ENCODE measurements at regions of chr1 and their contacts with region 1.

Region 1: DNA sequence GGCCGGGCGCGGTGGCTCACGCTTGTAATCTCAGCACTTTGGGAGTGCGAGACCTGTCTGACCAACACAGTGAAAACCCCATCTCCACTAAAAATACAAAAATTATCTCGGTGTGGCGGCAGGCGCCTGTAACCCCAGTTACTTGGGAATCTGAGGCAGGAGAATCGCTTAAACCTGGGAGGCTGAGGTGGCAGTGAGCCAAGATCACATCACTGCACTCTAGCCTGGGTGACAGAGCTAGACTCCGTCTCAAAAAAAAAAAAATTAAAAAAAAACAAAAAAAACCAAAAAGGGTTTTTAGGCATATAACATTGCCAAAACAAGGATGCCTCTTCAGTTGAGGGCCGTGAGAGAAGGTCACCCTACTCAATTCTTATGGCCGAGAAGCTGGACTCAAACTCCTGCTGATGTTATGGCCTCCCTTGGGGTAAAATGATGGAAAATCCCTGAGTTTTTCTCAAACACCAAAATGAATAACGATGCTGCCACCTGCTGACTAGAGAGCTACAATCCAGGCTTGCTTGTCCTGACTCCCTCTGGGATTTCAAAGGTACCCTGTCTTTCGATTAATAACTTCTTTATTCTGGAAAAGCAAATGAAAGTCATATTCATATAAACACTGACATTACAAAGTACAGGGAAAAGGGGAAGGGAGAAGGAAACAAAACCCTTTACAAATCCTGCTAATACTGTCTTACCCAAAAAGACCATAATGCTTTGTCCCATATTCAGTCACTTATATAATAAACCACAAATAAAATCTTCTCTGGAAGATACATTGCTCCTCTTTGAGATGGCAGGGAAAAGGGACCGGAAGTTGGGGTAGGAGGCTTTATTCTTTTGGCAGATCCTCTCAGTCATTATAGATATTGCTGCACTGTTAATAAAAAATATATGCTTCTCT is 10.7 kb downstream of the RAB42 start:
- DNase-seq: peak; percentile 78
- H3K4me3 ChIP-seq: no peak overlapping the region
- H3K27ac ChIP-seq: peak overlapping the region; percentile 63
- H3K4me1 ChIP-seq: peaks cover 27% of the 10 kb centered on the region
- H3K27me3 ChIP-seq: no peaks in the 10 kb centered on the region
- CTCF ChIP-seq: peak; percentile 66 to 76

Region 2: GRCh38 chr1:28359592-28360239 is 243.1 kb before region 1 on chr1:
- CTCF ChIA-PET with region 1: no interaction called
- dilution Hi-C with region 1: no loop called
- in situ Hi-C with region 1: no loop called
- intact Hi-C with region 1: loop called (anchors 1 kb)
- DNase-seq: peak; percentile 40
- H3K4me3 ChIP-seq: no peak overlapping the region
- H3K27ac ChIP-seq: no peak overlapping the region
- H3K4me1 ChIP-seq: peaks cover under 1% of the 10 kb centered on the region
- H3K27me3 ChIP-seq: no peaks in the 10 kb centered on the region
- CTCF ChIP-seq: peak; percentile 65 to 78

Region 3: DNA sequence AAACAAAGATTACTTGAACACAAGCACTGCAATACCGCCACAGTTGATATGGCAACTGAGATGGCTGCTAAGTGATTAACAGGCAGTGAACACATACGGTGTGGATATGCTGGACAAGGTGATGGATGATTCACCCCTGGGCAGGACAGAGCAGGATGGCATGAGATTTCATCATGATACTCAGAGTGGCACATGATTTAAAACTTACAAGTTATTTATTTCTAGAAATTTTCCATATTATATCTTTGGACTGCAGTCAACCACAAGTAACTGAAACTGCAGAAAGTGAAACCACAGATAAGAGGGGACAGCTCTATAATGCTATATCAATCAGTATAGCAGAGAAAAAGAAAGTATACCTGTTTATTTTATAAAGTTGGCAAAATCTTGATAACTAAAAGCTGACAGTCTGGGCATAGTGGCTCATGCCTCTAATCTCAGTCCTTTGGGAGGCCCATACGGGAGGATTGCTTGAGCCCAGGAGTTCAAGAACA is 185.3 kb before region 1 on chr1:
- CTCF ChIA-PET with region 1: no interaction called
- dilution Hi-C with region 1: loop called (anchors 5 kb)
- in situ Hi-C with region 1: no loop called
- intact Hi-C with region 1: no loop called
- DNase-seq: peak; percentile 95
- H3K4me3 ChIP-seq: peak overlapping the region in 1 of 3 experiments; percentile 15
- H3K27ac ChIP-seq: peak overlapping the region; percentile 100
- H3K4me1 ChIP-seq: peaks cover 20% of the 10 kb centered on the region
- H3K27me3 ChIP-seq: no peaks in the 10 kb centered on the region
- CTCF ChIP-seq: no peak

Region 4: GRCh38 chr1:28552758-28553663 is 49.8 kb before region 1 on chr1 and contains the start of gene TRNAU1AP:
- CTCF ChIA-PET with region 1: no interaction called
- dilution Hi-C with region 1: loop called (anchors 5 kb)
- in situ Hi-C with region 1: no loop called
- intact Hi-C with region 1: no loop called
- DNase-seq: peak; percentile 96
- H3K4me3 ChIP-seq: peak within 1 kb of the TSS; percentile 77 to 88 (median 78)
- H3K27ac ChIP-seq: peak within 1 kb of the TSS; percentile 84
- H3K4me1 ChIP-seq: no peaks in the 10 kb centered on the region
- H3K27me3 ChIP-seq: no peaks in the 10 kb centered on the region
- CTCF ChIP-seq: no peak
- total RNA-seq, gene TRNAU1AP: 21.3 to 36.9 TPM

Region 5: GRCh38 chr1:28682840-28683239 is 80.1 kb after region 1 on chr1:
- CTCF ChIA-PET with region 1: no interaction called
- dilution Hi-C with region 1: no loop called
- in situ Hi-C with region 1: no loop called
- intact Hi-C with region 1: no loop called
- DNase-seq: peak; percentile 39
- H3K4me3 ChIP-seq: no peak overlapping the region
- H3K27ac ChIP-seq: no peak overlapping the region
- H3K4me1 ChIP-seq: peaks cover 6% of the 10 kb centered on the region
- H3K27me3 ChIP-seq: no peaks in the 10 kb centered on the region
- CTCF ChIP-seq: no peak

Region 6: GRCh38 chr1:28703629-28704028 is 100.8 kb after region 1 on chr1:
- CTCF ChIA-PET with region 1: no interaction called
- dilution Hi-C with region 1: loop called (anchors 5 kb)
- in situ Hi-C with region 1: no loop called
- intact Hi-C with region 1: no loop called
- DNase-seq: no peak
- H3K4me3 ChIP-seq: no peak overlapping the region
- H3K27ac ChIP-seq: no peak overlapping the region
- H3K4me1 ChIP-seq: no peaks in the 10 kb centered on the region
- H3K27me3 ChIP-seq: no peaks in the 10 kb centered on the region
- CTCF ChIP-seq: no peak

Region 7: GRCh38 chr1:28779751-28780408 is 177.1 kb after region 1 on chr1:
- CTCF ChIA-PET with region 1: no interaction called
- dilution Hi-C with region 1: no loop called
- in situ Hi-C with region 1: no loop called
- intact Hi-C with region 1: no loop called
- DNase-seq: no peak
- H3K4me3 ChIP-seq: no peak overlapping the region
- H3K27ac ChIP-seq: no peak overlapping the region
- H3K4me1 ChIP-seq: peaks cover 6% of the 10 kb centered on the region
- H3K27me3 ChIP-seq: no peaks in the 10 kb centered on the region
- CTCF ChIP-seq: no peak

Measured in mammary epithelial cell (primary cell).